BJ (cell line): ENCODE measurements at regions of chr16 and their contacts with region 1.

Region 1: DNA sequence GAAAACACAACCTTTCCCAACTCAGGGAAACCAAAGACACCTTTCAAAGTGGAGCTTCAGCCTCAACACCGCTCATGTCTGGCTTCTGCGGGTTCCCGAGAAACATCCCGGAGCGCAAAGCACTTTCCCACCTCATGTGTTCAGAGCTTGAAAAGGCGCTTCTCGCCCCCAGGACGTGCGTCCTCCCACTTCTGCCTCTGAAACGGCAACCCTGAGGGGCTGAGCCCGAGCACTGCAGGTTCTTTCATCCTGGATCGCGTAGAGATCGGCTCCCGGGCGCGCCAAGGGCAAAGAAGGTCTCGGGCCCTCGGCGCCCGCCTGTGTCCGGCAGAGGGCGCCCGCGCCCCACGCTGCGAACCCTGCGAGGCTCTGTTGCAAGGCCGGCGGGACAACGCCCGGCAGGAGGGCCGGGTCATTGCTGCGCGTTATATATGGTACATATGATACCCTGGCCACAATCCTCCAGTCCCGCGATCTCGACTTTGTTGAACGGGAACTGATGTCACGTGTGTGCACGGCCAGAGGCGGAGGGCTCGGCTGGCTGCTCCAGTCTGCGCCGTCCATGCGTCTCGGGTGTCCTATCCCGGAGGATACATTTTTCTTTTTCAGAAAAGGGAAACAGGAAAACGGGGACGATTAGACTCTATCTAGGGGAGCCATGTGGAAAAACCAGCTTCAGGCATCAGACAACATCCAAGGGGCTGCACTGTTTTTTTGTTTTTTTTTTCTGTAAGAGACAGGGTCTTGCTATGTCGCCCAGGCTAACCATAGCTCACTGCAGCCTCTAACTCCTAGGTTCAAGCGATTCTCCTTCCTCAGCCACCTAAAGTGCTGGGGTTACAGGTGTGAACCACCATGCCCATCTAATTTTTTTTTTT is 19.1 kb downstream of the COQ7 start:
- DNase-seq: no peak
- H3K4me3 ChIP-seq: peak overlapping the region; percentile 35
- H3K27me3 ChIP-seq: no peaks in the 10 kb centered on the region
- CTCF ChIP-seq: peak; percentile 95

Region 2: GRCh38 chr16:18983565-18984424 is 102.8 kb before region 1 on chr16 and contains the start of gene TMC7:
- CTCF ChIA-PET with region 1: interaction called, 20 read pairs
- POLR2A ChIA-PET with region 1: no interaction called
- DNase-seq: no peak
- H3K4me3 ChIP-seq: peak within 1 kb of the TSS; percentile 52
- H3K27me3 ChIP-seq: no peaks in the 10 kb centered on the region
- CTCF ChIP-seq: peak; percentile 94
- polyA plus RNA-seq, gene TMC7: 0.40 and 0.47 TPM in 2 replicates

Region 3: DNA sequence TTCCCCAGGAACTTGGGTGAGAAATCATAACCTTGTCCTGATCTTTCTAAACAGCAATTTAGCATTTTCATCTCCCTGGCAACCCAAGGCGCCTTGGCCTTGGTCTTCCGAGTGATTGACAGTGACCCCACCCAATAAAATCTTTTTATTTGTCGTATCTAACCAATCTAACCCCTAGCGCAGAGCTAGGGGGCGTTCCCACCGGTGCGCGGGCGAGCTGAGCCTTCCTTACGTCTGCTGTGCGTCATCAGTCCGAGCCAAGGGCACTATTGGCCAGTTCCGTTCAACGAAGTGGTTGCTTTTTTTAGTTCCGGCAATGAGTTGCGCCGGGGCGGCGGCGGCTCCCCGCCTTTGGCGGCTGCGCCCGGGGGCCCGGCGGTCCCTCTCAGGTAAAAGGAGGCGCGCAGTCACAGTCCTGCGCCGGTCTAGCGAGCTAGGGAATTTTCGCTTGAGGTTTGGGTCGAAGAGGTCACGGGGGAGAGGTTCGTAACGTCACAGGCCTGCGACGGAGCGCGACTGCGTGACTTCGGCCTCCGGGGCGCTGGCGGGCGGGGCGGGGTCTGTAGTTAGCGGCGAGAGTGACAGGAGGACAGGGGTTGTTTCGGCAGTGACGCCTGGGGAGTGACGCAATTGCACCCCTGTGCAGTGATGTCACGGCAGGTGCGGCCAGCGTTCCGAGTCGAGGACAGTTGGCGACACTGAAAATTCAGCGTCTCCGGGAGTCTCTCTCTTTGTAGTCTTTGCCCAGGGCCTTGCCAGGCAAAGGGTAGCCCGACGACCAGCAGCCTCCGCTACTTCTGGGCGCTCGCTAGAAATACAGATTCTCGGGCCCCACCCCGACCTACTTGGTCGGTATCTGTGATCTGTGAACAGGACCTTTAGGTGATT is 19.0 kb before region 1 on chr16 and contains the start of gene COQ7:
- CTCF ChIA-PET with region 1: interaction called, 17 read pairs
- POLR2A ChIA-PET with region 1: no interaction called
- DNase-seq: peak; percentile 97
- H3K4me3 ChIP-seq: peak within 1 kb of the TSS; percentile 72
- H3K27me3 ChIP-seq: no peaks in the 10 kb centered on the region
- CTCF ChIP-seq: no peak
- polyA plus RNA-seq, gene COQ7: 10.7 and 13.1 TPM in 2 replicates

Region 4: GRCh38 chr16:19179546-19180490 is 93.3 kb after region 1 on chr16:
- CTCF ChIA-PET with region 1: interaction called, 80 read pairs
- POLR2A ChIA-PET with region 1: no interaction called
- DNase-seq: no peak
- H3K4me3 ChIP-seq: no peak overlapping the region
- H3K27me3 ChIP-seq: peaks cover 2% of the 10 kb centered on the region; the same call in 1 of the 2 replicates
- CTCF ChIP-seq: peak; percentile 62

Region 5: GRCh38 chr16:19375561-19376158 is 289.1 kb after region 1 on chr16:
- CTCF ChIA-PET with region 1: interaction called, 22 read pairs
- POLR2A ChIA-PET with region 1: no interaction called
- DNase-seq: peak; percentile 1
- H3K4me3 ChIP-seq: no peak overlapping the region
- H3K27me3 ChIP-seq: no peaks in the 10 kb centered on the region
- CTCF ChIP-seq: peak; percentile 78

Region 6: GRCh38 chr16:19502395-19503131 is 416.0 kb after region 1 on chr16:
- CTCF ChIA-PET with region 1: interaction called, 28 read pairs
- POLR2A ChIA-PET with region 1: no interaction called
- DNase-seq: no peak
- H3K4me3 ChIP-seq: no peak overlapping the region
- H3K27me3 ChIP-seq: no peaks in the 10 kb centered on the region
- CTCF ChIP-seq: peak; percentile 82

Region 7: GRCh38 chr16:20866145-20866772 is 1779.7 kb after region 1 on chr16:
- CTCF ChIA-PET with region 1: no interaction called
- POLR2A ChIA-PET with region 1: no interaction called
- DNase-seq: peak; percentile 29
- H3K4me3 ChIP-seq: no peak overlapping the region
- H3K27me3 ChIP-seq: no peaks in the 10 kb centered on the region
- CTCF ChIP-seq: no peak